H1 (cell line): ENCODE measurements at regions of chr15 and their contacts with region 1.

Region 1: GRCh38 chr15:42118650-42119445 is 24.5 kb upstream of the PLA2G4D start:
- DNase-seq: no peak
- H3K4me3 ChIP-seq: no peak overlapping the region; a peak in 1 of 8 replicates
- H3K27ac ChIP-seq: no peak overlapping the region
- H3K4me1 ChIP-seq: peaks cover 0 to 6% (median under 1%) of the 10 kb centered on the region in 4 experiments; a peak in 3 of 7 replicates
- H3K27me3 ChIP-seq: no peaks in the 10 kb centered on the region
- CTCF ChIP-seq: no peak
- EP300 ChIP-seq: no peak
- POLR2A ChIP-seq: no peak
- RAD21 ChIP-seq: no peak

Region 2: DNA sequence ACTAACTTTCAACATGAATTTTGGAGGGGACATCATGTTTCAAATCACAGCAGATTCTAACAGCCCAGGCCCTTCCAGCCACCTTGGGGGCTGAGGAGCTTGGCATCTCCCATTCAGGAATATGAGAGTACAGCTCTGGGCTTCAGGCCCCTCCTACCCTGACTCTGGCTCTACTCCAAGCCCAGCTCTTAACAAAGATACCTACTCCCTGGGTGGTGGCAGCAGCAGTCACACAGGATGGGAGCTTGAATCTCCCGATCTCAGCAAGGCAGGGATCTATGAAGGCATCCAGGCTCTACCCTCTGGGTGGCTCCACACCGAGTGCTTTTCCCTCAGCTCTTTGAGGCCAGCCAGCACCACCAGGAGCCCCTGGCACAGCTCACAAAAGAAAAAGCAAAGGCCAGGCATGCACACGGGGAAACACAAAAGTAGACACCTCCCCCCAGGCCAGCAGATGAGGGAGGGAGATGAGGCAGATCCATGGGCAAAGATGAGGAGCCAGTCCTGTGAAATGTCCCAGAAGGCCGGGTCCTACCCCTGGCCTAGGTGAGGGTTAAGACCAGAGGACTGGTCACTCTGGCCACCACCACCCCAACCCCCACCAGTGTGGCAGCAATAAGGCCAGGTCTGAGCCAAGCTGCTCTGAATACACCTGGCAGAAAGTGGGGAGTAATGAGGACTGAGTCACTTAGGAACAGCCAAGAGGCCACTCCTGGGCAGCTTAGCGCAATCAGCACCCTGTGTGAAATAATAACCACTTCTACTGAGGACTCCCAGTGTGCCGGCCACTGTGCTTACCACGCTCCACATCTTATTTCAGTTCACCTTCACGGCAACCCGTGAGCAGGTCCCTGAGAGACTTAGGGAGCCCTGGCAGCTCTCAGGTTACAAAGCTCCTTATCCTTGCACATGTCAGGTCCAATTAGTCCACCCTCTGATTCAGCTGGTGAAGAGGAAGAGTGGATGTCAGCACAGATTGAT is 13.3 kb after region 1 on chr15:
- CTCF ChIA-PET with region 1: interaction called, 42 read pairs
- POLR2A ChIA-PET with region 1: no interaction called
- DNase-seq: no peak
- H3K4me3 ChIP-seq: no peak overlapping the region
- H3K27ac ChIP-seq: no peak overlapping the region
- H3K4me1 ChIP-seq: peaks cover 0 to 7% (median 4%) of the 10 kb centered on the region in 4 experiments; a peak in 3 of 7 replicates
- H3K27me3 ChIP-seq: no peaks in the 10 kb centered on the region
- CTCF ChIP-seq: no peak
- EP300 ChIP-seq: no peak
- POLR2A ChIP-seq: no peak
- RAD21 ChIP-seq: no peak

Region 3: GRCh38 chr15:42207674-42208579 is 89.1 kb after region 1 on chr15 and contains the start of gene VPS39:
- CTCF ChIA-PET with region 1: no interaction called
- POLR2A ChIA-PET with region 1: no interaction called
- DNase-seq: peak; percentile 41 to 86
- H3K4me3 ChIP-seq: peak within 1 kb of the TSS; percentile 49 to 95 (median 93)
- H3K27ac ChIP-seq: peak within 1 kb of the TSS; percentile 57
- H3K4me1 ChIP-seq: peaks cover 0 to 6% (median 2%) of the 10 kb centered on the region in 4 experiments; a peak in 3 of 7 replicates
- H3K27me3 ChIP-seq: no peaks in the 10 kb centered on the region
- CTCF ChIP-seq: no peak
- EP300 ChIP-seq: no peak
- POLR2A ChIP-seq: peak; percentile 80 to 85
- RAD21 ChIP-seq: no peak
- total RNA-seq, gene VPS39: 36.6 and 39.6 TPM in 2 replicates

Region 4: DNA sequence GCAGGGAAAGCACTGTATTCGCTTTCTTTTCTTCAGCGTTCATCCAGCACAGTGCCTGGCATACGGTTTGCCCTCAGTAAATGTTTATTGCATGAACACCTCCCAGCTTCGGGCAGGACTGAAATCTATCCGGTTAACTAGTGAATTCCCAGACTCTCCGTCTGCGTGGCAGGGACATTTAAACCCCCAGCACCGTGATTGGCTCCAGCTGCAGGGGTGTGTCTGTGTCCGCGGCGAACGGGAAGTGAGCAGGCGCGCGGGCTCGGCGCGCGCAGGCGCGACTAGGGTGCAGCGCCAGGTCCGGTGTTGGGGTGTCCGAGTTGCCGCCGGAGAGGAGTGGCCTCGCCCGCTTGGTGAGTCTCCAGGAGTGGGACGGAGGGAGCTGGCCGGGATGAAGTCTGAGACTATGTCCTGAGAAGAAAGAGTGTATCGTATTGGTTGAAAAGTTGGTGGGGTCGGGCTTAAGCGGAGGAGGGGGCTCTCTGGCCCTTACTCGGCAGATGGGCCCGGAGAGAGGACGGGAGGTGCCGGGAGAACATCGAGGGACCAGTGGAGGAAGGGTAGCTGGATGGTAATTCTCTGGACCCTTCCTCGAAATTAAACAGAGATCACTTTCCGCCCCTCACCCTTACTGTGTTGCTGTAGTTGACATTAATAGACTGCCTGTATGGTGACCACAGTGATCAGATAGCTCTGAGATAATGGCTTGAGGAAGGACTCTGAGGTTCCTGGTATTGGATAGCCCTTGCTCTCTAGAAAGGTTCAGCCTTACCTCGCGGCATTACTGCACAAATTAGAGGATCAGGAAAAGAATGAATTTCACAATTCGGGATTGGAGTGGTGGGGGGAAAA is 376.7 kb after region 1 on chr15 and contains the start of gene SNAP23:
- CTCF ChIA-PET with region 1: no interaction called
- POLR2A ChIA-PET with region 1: no interaction called
- DNase-seq: peak; percentile 76 to 90
- H3K4me3 ChIP-seq: peak within 1 kb of the TSS; percentile 71 to 98 (median 88)
- H3K27ac ChIP-seq: peak within 1 kb of the TSS; percentile 39; the same call in 1 of the 2 replicates
- H3K4me1 ChIP-seq: peaks cover 0 to 5% (median 1%) of the 10 kb centered on the region in 4 experiments; a peak in 4 of 7 replicates
- H3K27me3 ChIP-seq: no peaks in the 10 kb centered on the region
- CTCF ChIP-seq: no peak; a peak in 1 of 4 replicates
- EP300 ChIP-seq: no peak
- POLR2A ChIP-seq: peak; percentile 45 to 67
- RAD21 ChIP-seq: no peak
- total RNA-seq, gene SNAP23: 71.3 and 72.8 TPM in 2 replicates